ENCODE measurements at regions of chr6 and their contacts with region 1.

Region 1: DNA sequence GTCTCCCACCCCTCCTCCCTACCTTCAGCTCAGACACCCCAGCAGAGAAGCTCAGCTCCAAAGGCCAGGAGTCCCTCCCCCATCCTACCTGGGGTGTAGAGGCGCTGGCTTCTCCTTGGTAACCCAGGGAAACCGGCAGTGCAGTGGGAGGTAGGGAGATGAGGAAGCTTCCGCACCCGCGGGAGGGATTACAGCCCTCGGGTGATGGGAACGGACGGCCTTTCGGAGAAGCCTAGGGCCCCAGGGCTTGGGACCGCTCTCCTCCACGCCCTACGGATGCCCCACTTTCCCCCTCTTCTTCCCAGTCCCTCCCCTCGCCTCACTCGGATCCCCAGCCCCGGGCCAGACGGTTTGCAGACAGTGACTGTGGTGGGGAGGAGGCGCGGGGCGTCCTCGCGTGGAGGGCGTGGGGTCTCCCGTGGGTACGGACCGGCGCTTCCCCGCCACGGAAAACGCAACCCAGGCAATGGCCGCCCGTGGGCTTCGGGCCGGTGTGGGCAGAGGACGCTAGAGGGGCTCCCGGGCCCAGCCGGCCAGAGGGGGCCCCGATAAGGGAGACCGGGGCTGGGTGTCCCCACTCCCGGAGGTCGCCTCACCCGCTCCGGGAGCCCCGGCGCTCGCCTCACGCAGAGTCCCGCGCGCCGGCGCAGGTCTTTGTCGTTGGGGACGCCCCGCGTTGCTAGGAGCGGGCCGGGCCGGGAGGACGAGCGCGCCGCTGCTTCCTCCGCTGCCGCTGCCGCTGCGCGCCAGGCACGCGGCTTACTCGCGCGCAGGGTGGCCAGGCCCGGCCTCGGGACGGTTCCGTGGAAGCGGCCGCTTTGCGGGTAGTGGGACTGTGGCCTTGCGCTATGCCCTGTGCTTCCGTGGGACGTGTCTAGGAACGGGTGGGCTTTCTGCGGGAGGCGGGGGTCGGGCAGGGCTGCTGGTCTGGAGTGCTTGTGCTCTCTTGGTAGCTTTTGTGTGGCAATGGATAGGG is 15.8 kb downstream of the AARS2 start:
- DNase-seq: peak in 1 of 2 experiments; percentile 54
- H3K4me3 ChIP-seq: peak overlapping the region; percentile 49
- H3K4me3 Mint-ChIP-seq: peak overlapping the region; percentile 66
- H3K27ac Mint-ChIP-seq: no peak overlapping the region
- H3K4me1 ChIP-seq: peaks cover 9% of the 10 kb centered on the region; the same call in 1 of the 2 replicates
- H3K4me1 Mint-ChIP-seq: peaks cover 7% of the 10 kb centered on the region
- H3K27me3 ChIP-seq: peaks cover 4% of the 10 kb centered on the region; the same call in 1 of the 2 replicates
- H3K27me3 Mint-ChIP-seq: peaks cover 12% of the 10 kb centered on the region
- CTCF ChIP-seq: no peak

Region 2: GRCh38 chr6:44312901-44313788 is 15.8 kb after region 1 on chr6 and contains the start of gene AARS2:
- CTCF ChIA-PET with region 1: interaction called, 13 read pairs
- POLR2A ChIA-PET with region 1: interaction called, 3 read pairs
- intact Hi-C with region 1: no loop called
- DNase-seq: peak; percentile 89 to 94
- H3K4me3 ChIP-seq: peak within 1 kb of the TSS; percentile 62
- H3K4me3 Mint-ChIP-seq: peak within 1 kb of the TSS; percentile 98
- H3K27ac Mint-ChIP-seq: peak within 1 kb of the TSS; percentile 94
- H3K4me1 ChIP-seq: no peaks in the 10 kb centered on the region
- H3K4me1 Mint-ChIP-seq: no peaks in the 10 kb centered on the region
- H3K27me3 ChIP-seq: no peaks in the 10 kb centered on the region
- H3K27me3 Mint-ChIP-seq: peaks cover 6% of the 10 kb centered on the region
- CTCF ChIP-seq: peak; percentile 90 to 98
- total RNA-seq, gene AARS2: 18.8 and 20.5 TPM in 2 replicates

Measured in Caco-2 (cell line).